ENCODE measurements at regions of chr22 and their contacts with region 1.

Region 1: DNA sequence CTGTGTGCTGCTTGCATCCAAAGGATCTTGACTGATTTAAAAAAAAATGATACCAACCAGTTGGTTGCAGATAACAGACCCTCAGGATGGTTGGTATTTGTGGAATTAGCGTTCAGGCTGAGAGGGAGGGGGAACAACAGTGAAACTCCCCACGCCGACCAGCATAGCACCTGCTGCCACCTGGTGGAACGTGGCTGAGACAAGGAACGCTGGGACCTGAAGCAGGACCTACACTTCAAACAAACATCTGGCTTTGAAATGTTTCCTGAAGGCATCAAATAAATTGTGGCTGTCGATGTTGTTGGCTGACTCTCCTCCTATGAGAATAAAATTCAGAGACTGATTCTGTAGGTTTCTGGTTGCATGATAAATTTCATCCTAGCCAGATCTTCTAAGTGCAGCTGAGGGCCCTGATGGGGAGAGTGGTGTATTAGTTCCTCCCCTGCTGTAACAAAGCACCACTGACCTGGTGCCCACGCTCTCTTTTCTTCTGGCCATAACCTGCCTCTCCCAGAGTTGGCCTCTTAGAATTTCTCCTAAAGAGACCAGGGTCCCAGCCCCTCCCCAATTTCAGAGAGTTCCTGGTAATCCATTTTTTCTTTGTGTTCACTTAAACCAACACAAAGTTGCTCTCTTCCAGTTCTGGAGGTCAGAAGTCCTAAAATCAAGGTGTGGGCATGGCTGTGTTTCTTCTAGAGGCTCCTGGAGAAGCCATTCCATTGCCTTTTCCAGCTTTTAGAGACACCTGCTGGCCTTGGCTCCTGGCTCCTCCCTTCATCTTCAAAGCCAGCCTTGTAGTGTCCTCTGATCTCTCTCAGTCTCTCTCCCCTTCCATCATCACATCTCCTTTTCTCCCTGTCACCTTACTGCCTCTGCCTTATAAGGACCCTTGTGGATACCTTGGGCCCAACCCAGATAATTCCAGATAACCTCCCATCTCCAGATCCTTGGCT is 17.3 kb downstream of the APOL2 start:
- DNase-seq: peak; percentile 46
- ATAC-seq: peak; percentile 86
- H3K4me3 ChIP-seq: no peak overlapping the region
- H3K27ac ChIP-seq: no peak overlapping the region
- H3K4me1 ChIP-seq: no peaks in the 10 kb centered on the region
- H3K27me3 ChIP-seq: peaks cover 13% of the 10 kb centered on the region
- CTCF ChIP-seq: peak; percentile 70

Region 2: DNA sequence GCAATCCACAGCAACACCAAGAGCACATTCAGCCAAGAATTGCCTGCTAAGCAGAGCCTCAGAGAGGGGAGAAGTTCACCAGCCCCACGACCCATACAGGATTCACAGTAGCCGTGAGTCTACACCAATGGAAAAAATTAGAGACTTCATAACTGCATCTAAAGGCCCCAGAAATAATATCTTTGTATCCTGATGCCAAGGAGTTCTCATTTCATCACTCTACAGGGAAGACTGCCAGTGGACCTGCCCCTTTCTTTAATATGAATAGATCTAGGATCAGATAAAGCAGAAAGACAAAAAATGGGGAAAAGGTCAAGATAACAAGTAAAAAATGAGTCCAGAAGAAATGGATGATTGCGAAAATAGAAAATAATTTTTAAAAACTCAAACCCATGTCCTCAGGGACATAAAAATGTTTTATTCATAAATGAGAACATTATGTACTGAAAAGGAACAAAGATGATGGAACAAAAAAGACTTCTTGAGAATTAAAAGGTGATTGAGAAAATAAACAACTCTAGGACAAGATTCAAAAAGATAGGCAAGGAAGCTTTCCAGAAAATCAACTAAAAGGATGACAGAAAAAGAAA is 71.0 kb before region 1 on chr22:
- CTCF ChIA-PET with region 1: no interaction called
- POLR2A ChIA-PET with region 1: no interaction called
- intact Hi-C with region 1: loop called (anchors 5 kb)
- DNase-seq: no peak
- ATAC-seq: no peak
- H3K4me3 ChIP-seq: no peak overlapping the region
- H3K27ac ChIP-seq: no peak overlapping the region
- H3K4me1 ChIP-seq: no peaks in the 10 kb centered on the region
- H3K27me3 ChIP-seq: no peaks in the 10 kb centered on the region
- CTCF ChIP-seq: no peak

Region 3: DNA sequence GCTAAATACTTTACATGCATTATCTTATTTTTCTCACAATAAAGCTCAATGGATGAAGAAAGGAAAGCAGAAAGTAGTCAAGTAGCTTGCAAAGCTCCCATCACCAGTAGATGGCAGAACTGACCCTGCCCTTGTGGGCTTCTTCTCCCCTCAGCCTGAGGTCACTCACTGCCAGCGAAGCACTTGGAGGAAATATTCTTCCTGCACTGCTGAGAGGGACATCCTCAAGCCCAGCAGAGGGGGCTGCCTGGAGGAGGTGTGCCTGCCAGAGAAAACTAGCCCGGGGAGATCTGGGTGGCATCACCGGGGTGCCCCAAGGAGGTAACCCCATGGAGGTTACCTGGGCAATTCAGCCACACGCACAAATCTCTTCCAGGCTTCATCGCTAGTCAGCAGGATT is 27.1 kb before region 1 on chr22:
- CTCF ChIA-PET with region 1: no interaction called
- POLR2A ChIA-PET with region 1: interaction called, 4 read pairs
- intact Hi-C with region 1: loop called (anchors 2 kb)
- DNase-seq: peak; percentile 65
- ATAC-seq: peak; percentile 78
- H3K4me3 ChIP-seq: no peak overlapping the region
- H3K27ac ChIP-seq: no peak overlapping the region
- H3K4me1 ChIP-seq: no peaks in the 10 kb centered on the region
- H3K27me3 ChIP-seq: no peaks in the 10 kb centered on the region
- CTCF ChIP-seq: peak; percentile 71

Region 4: DNA sequence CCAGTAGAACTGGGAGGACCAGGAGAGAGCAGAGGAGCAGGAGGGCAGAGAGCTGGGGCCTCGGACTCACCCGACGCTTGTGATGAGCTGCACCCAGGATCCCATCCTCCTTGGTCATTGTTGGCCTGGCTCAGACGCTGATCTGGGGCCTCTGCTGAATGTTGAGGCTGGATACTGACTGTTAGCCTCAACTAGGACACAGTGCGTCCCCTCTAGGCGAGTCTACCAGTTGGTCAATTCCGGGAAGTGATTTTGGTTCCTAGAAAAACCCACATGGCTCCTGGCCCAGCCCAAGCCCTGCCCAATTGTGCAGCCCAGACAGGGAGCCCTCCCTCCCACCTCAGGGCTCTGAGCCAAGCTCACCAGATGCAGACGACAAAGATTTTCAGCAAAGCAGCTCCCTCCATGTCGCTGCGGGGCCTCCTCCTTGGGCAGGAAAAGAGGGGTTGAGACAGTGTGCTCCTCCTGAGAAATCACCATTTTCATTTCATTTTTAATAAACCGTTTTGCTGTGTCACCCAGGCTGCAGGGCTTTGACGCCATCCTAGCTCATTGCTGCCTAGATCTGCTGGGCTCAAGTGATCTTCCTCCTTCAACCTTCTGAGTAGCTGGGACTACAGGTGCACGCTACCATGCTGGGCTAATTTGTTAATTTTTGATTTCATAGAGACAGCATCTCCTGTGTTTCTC is 20.3 kb before region 1 on chr22 and contains the start of gene APOL4:
- CTCF ChIA-PET with region 1: no interaction called
- POLR2A ChIA-PET with region 1: no interaction called
- intact Hi-C with region 1: loop called (anchors 2 kb)
- DNase-seq: no peak
- ATAC-seq: no peak
- H3K4me3 ChIP-seq: no peak within 1 kb of the TSS; the same call in 1 of the 2 replicates
- H3K27ac ChIP-seq: no peak within 1 kb of the TSS
- H3K4me1 ChIP-seq: peaks cover 5% of the 10 kb centered on the region; the same call in 1 of the 2 replicates
- H3K27me3 ChIP-seq: no peaks in the 10 kb centered on the region
- CTCF ChIP-seq: no peak
- total RNA-seq, gene APOL4: 0.04 TPM in 1 of 2 replicates, not detected in the other